Activated CD8-positive, alpha-beta memory T cell treated with anti-CD3 and anti-CD28 coated beads, Interleukin-2, amount 10 ng/mL, durations not matched to agents 7 days and 5 days (primary cell): ENCODE measurements at regions of chr12 and their contacts with region 1.

Region 1: DNA sequence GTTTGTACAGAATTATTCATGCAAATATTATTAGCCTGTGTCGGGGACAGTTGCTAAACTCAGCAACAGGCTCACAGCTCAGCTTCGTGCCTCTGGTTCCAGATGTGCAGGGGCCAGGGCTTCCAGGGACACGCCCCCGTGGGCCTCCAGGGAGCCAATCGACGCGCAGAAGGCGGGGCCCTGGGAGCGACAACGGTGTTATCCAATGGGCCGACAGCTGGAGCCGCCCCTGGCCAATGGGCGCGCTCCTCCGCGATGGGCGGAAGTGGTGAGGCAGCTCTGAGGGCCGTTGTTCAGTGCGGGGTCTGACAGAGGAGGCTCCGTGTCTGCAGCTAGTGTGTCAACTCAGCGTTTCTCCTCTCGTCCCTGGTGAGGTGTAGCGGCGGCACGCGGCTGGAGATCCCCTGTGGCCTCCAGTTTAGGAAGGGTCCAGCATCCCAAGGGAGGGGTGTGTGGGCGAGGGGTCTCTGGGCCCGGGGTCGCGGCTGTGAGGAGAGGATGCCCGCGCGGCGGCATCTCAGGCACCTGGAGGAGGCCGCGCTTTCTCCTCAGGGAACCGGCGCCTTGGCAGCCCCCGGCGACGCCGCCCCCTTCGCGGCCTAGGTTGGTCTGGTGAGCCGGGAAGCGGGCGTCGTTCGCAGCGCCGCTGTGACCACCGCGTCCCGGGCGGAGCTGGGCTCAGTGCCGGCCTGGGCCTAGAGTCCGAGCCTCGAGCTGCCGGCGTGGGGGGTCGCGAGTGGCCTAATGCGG is at the start of gene TRAFD1:
- DNase-seq: peak; percentile 99
- ATAC-seq: peak; percentile 100
- H3K4me3 Mint-ChIP-seq: peak within 1 kb of the TSS; percentile 82
- H3K27ac Mint-ChIP-seq: peak within 1 kb of the TSS; percentile 85
- H3K4me1 Mint-ChIP-seq: peaks cover 36% of the 10 kb centered on the region
- H3K27me3 Mint-ChIP-seq: no peaks in the 10 kb centered on the region
- total RNA-seq, gene TRAFD1: 52.1 to 56.8 TPM

Region 2: DNA sequence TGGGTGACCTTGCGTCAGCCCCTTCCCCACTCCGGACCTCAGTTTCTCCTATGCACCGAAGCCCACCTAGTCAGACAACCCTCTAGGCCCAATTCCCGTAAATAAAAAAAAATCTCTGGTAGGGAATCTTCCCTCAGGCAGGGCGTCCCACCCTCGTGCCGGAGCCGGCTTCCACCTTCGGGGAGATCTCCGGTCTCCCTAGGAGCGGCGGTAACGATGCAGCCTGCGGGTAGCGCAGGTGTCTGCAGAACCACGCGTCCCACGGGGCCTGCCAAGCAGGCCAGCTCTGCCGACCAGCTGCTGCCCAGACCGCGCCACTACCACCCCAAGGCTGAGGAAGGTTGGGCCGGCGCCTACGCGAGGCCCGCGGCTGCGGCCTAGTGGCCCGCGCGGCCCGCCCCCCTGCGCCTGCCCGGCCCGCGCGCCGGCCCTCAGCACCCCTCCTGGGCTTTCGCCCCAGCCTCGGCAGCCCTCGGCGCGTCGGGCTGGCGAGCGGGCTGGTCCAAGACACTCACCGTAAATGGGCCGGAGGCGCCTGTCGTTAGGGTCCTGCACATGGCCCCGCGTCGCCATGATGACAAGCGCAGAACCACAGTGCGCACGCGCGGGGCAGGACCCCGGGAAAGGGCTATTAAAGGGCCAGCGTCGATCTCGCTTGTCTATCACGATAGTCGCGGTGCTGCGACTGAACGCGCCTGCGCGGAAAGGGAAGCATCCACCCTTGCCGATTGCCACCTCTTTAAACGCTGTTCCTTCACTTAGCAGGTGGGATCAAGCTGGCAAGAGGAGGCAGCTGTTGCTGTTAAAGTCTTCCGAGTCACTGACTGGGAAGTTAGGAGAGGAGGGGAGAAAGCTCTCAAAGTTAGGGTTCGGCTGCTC is 17.0 kb before region 1 on chr12 and contains the start of gene NAA25:
- CTCF ChIA-PET with region 1: interaction called, 17 read pairs
- DNase-seq: peak; percentile 93
- ATAC-seq: peak; percentile 91
- H3K4me3 Mint-ChIP-seq: peak within 1 kb of the TSS; percentile 79
- H3K27ac Mint-ChIP-seq: peak within 1 kb of the TSS; percentile 98
- H3K4me1 Mint-ChIP-seq: peaks cover 42% of the 10 kb centered on the region
- H3K27me3 Mint-ChIP-seq: no peaks in the 10 kb centered on the region
- total RNA-seq, gene NAA25: 30.2 to 32.1 TPM

Region 3: DNA sequence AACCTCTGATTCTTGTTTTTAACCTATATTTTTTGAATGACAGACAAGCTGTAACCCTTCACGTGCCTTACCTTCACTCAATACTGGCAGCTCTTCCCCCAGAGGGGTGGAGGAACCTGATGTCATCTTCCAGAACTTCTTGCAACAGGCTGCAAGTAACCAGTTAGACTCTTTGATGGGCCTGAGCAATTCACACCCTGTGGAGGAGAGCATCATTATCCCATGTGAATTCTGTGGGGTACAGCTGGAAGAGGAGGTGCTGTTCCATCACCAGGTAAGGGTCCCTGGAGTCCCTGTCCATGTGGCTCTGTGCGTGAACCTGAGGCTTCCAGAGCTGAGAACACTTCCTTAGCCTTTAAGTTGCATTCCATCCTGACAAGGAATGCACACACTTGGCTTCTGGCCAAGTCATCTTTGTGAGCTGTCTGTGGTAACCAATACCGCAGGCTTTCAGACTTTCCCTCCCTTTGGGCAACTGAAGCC is 22.6 kb after region 1 on chr12:
- CTCF ChIA-PET with region 1: no interaction called
- DNase-seq: peak; percentile 29
- ATAC-seq: no peak
- H3K4me3 Mint-ChIP-seq: no peak overlapping the region
- H3K27ac Mint-ChIP-seq: no peak overlapping the region
- H3K4me1 Mint-ChIP-seq: no peaks in the 10 kb centered on the region
- H3K27me3 Mint-ChIP-seq: no peaks in the 10 kb centered on the region